ENCODE measurements at regions of chr10 and their contacts with region 1.

Region 1: GRCh38 chr10:8044908-8045725 is 9.4 kb upstream of the GATA3 start:
- DNase-seq: no peak
- ATAC-seq: peak in 2 of 8 donors; percentile 10 to 39
- H3K4me3 ChIP-seq: peak overlapping the region in 9 of 10 donors; percentile 8 to 44 (median 33)
- H3K27ac ChIP-seq: no peak overlapping the region
- H3K4me1 ChIP-seq: peaks cover 5 to 53% (median 26%) of the 10 kb centered on the region in 9 donors
- H3K27me3 ChIP-seq: peaks cover 67 to 100% (median 99%) of the 10 kb centered on the region in 7 donors
- CTCF ChIP-seq: no peak

Region 2: DNA sequence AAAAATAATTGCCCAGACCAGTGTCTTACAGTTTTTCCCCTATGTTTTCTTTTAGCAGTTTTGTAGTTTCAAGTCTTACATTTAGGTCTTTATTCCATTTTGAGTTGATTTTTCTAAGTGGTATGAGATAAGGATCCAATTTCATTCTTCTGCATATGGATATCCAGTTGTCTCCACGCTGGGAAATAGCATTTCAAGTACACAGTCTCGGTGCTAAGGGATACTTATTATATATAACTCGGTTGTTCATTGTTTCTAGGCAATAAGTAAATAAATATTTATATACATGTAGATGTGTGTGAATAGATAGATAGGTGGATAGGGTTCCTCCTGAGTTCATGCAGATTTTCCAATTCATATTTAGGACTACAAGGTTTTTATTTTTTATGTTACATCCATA is 210.9 kb before region 1 on chr10:
- intact Hi-C with region 1: no loop called
- DNase-seq: no peak
- ATAC-seq: no peak
- H3K4me3 ChIP-seq: no peak overlapping the region
- H3K27ac ChIP-seq: no peak overlapping the region
- H3K4me1 ChIP-seq: peaks cover 0 to 14% (median 5%) of the 10 kb centered on the region in 9 donors
- H3K27me3 ChIP-seq: no peaks in the 10 kb centered on the region
- CTCF ChIP-seq: no peak

Region 3: GRCh38 chr10:7998831-7999230 is 46.3 kb before region 1 on chr10:
- intact Hi-C with region 1: no loop called
- DNase-seq: no peak
- ATAC-seq: no peak
- H3K4me3 ChIP-seq: no peak overlapping the region
- H3K27ac ChIP-seq: no peak overlapping the region
- H3K4me1 ChIP-seq: no peaks in the 10 kb centered on the region
- H3K27me3 ChIP-seq: no peaks in the 10 kb centered on the region
- CTCF ChIP-seq: no peak

Region 4: DNA sequence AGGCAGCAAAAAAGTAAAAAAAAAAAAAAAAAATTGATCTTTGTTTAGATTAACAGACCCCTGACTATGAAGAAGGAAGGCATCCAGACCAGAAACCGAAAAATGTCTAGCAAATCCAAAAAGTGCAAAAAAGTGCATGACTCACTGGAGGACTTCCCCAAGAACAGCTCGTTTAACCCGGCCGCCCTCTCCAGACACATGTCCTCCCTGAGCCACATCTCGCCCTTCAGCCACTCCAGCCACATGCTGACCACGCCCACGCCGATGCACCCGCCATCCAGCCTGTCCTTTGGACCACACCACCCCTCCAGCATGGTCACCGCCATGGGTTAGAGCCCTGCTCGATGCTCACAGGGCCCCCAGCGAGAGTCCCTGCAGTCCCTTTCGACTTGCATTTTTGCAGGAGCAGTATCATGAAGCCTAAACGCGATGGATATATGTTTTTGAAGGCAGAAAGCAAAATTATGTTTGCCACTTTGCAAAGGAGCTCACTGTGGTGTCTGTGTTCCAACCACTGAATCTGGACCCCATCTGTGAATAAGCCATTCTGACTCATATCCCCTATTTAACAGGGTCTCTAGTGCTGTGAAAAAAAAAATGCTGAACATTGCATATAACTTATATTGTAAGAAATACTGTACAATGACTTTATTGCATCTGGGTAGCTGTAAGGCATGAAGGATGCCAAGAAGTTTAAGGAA is 28.7 kb after region 1 on chr10:
- intact Hi-C with region 1: no loop called
- DNase-seq: no peak
- ATAC-seq: no peak
- H3K4me3 ChIP-seq: no peak overlapping the region
- H3K27ac ChIP-seq: no peak overlapping the region
- H3K4me1 ChIP-seq: peaks cover 0 to 6% (median 0%) of the 10 kb centered on the region in 9 donors
- H3K27me3 ChIP-seq: peaks cover 0 to 53% (median 18%) of the 10 kb centered on the region in 7 donors
- CTCF ChIP-seq: no peak

Region 5: GRCh38 chr10:8473205-8473604 is 428.1 kb after region 1 on chr10:
- intact Hi-C with region 1: loop called in 3 of 10 experiments (anchors 5 to 10 kb)
- DNase-seq: no peak
- ATAC-seq: no peak
- H3K4me3 ChIP-seq: no peak overlapping the region
- H3K27ac ChIP-seq: no peak overlapping the region
- H3K4me1 ChIP-seq: no peaks in the 10 kb centered on the region
- H3K27me3 ChIP-seq: peaks cover 0 to 7% (median 0%) of the 10 kb centered on the region in 7 donors
- CTCF ChIP-seq: peak in 6 of 9 donors; percentile 27 to 48 (median 30)

Measured in heart right ventricle (tissue), 16 donors.